A549 (cell line): ENCODE measurements at regions of chr2 and their contacts with region 1.

Region 1: DNA sequence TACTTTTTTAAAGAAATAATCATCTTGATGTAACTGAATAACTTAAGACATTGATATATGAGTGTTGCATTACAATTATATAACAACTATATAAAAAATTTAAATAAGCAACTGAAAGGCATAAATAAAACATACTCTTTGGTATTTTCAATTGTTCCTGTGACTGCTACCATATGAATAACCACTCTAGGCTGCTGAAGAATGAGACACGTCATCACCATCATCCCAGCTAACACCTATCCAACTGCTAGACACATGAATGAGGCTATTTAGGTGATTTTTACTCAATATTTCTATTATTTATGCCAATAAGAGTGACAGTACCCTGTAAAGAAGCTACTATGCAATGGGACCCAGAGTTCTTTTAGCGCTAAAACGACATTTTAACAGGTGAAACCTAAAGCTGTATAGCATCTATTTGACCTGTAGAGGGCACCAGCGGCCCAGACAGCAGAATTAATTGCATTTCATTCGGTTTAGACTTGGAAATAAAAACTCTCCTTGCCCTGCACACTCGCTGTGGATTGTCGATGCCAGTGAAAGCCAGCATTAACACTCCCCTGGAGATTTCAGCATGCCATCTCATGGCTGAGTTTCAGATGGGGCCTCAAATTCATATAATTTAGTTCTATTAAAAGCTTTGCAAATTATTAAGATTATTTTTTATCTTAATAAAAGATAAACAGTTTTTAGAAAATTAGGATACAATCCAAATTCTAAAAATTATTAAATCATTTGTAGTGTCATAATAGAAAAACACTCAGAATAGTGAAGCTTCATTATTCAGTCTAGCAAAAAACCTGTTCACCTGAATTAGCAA is 89.4 kb upstream of the MAP2 start:
- DNase-seq: peak; percentile 6 to 62
- ATAC-seq: peak; percentile 85 to 90
- H3K4me3 ChIP-seq: no peak overlapping the region
- H3K27ac ChIP-seq: no peak overlapping the region
- H3K4me1 ChIP-seq: no peaks in the 10 kb centered on the region
- CTCF ChIP-seq: peak; percentile 95
- EP300 ChIP-seq: no peak
- POLR2A ChIP-seq: no peak
- RAD21 ChIP-seq: peak; percentile 94 to 95

Region 2: GRCh38 chr2:209322041-209322440 is 12.4 kb before region 1 on chr2:
- CTCF ChIA-PET with region 1: interaction called, 34 read pairs
- POLR2A ChIA-PET with region 1: no interaction called
- DNase-seq: no peak
- ATAC-seq: no peak
- H3K4me3 ChIP-seq: no peak overlapping the region
- H3K27ac ChIP-seq: no peak overlapping the region
- H3K4me1 ChIP-seq: no peaks in the 10 kb centered on the region
- CTCF ChIP-seq: no peak
- EP300 ChIP-seq: no peak
- POLR2A ChIP-seq: no peak
- RAD21 ChIP-seq: peak; percentile 25 to 28; a peak in 1 of 5 replicates

Region 3: GRCh38 chr2:209358992-209359391 is 24.6 kb after region 1 on chr2:
- CTCF ChIA-PET with region 1: interaction called, 20 read pairs
- POLR2A ChIA-PET with region 1: no interaction called
- DNase-seq: no peak
- ATAC-seq: no peak
- H3K4me3 ChIP-seq: no peak overlapping the region
- H3K27ac ChIP-seq: no peak overlapping the region
- H3K4me1 ChIP-seq: no peaks in the 10 kb centered on the region
- CTCF ChIP-seq: no peak
- EP300 ChIP-seq: no peak
- POLR2A ChIP-seq: no peak
- RAD21 ChIP-seq: no peak

Region 4: DNA sequence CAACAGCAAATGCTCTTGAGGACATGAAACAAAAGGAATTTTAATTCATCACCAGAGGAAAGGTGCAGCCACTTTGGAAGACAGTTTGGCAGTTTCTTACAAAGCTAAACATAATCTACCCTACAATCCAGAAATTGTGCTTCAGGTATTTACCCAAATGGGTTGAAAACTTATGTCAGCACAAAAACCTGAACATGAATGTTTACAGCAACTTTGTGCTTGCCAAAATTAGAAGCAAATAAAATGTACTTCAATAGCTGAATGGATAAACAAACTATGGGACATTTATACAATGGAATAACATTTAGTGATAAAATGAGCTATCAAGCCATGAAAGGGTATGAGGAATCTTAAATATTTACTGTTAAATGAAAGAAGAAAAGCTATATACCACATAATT is 82.5 kb after region 1 on chr2:
- CTCF ChIA-PET with region 1: interaction called, 119 read pairs
- POLR2A ChIA-PET with region 1: no interaction called
- DNase-seq: no peak
- ATAC-seq: no peak
- H3K4me3 ChIP-seq: no peak overlapping the region
- H3K27ac ChIP-seq: no peak overlapping the region
- H3K4me1 ChIP-seq: no peaks in the 10 kb centered on the region
- CTCF ChIP-seq: no peak
- EP300 ChIP-seq: no peak
- POLR2A ChIP-seq: no peak
- RAD21 ChIP-seq: no peak

Region 5: DNA sequence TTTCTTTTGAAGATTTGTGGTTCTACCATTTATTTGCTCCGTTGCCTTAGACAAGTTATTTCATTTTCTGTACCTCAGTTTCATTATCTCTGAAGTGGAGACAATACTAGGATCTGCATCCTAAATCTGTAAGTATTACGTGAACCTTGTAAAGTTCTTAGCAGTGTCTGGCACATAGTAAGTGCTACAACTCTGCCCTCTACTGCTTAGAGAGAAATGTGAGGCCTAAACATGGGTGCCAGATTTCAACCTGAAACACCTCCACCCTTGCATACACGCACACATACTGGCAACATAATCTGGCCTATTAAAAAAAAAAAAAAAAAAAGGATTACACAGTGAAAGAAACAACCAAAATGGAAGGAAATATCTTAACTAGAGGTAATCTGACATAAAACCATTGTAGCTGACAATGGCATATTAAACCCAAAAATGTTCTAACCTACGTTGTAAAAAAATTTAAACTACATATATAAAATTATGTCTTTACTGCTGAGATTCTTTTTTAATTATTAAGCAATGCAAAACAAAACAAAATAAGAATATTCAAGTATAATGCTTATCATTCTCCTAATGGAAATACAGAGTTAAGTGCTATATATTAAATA is 222.1 kb after region 1 on chr2:
- CTCF ChIA-PET with region 1: interaction called, 67 read pairs
- POLR2A ChIA-PET with region 1: interaction called, 4 read pairs
- DNase-seq: peak; percentile 8 to 57
- ATAC-seq: peak; percentile 90 to 93; a peak in 5 of 6 replicates
- H3K4me3 ChIP-seq: no peak overlapping the region
- H3K27ac ChIP-seq: no peak overlapping the region; a peak in 1 of 6 replicates
- H3K4me1 ChIP-seq: no peaks in the 10 kb centered on the region
- CTCF ChIP-seq: peak; percentile 71
- EP300 ChIP-seq: no peak
- POLR2A ChIP-seq: no peak
- RAD21 ChIP-seq: peak; percentile 78 to 83

Region 6: GRCh38 chr2:209577376-209578357 is 243.3 kb after region 1 on chr2:
- CTCF ChIA-PET with region 1: interaction called, 13 read pairs
- POLR2A ChIA-PET with region 1: no interaction called
- DNase-seq: peak in 1 of 2 experiments; percentile 12
- ATAC-seq: no peak
- H3K4me3 ChIP-seq: no peak overlapping the region
- H3K27ac ChIP-seq: no peak overlapping the region
- H3K4me1 ChIP-seq: no peaks in the 10 kb centered on the region
- CTCF ChIP-seq: peak; percentile 61
- EP300 ChIP-seq: no peak
- POLR2A ChIP-seq: no peak
- RAD21 ChIP-seq: peak; percentile 47 to 65